Mammary epithelial cell (primary cell): ENCODE measurements at regions of chr10 and their contacts with region 1.

Region 1: GRCh38 chr10:80504158-80504811 is 33.4 kb upstream of the SH2D4B start:
- DNase-seq: no peak
- H3K4me3 ChIP-seq: no peak overlapping the region
- H3K27ac ChIP-seq: no peak overlapping the region
- H3K4me1 ChIP-seq: peaks cover 79% of the 10 kb centered on the region
- H3K27me3 ChIP-seq: no peaks in the 10 kb centered on the region
- CTCF ChIP-seq: no peak

Region 2: GRCh38 chr10:80382989-80383388 is 121.3 kb before region 1 on chr10:
- CTCF ChIA-PET with region 1: interaction called, 7 read pairs
- dilution Hi-C with region 1: no loop called
- in situ Hi-C with region 1: no loop called
- intact Hi-C with region 1: loop called (anchors 1 kb)
- DNase-seq: peak; percentile 27
- H3K4me3 ChIP-seq: no peak overlapping the region
- H3K27ac ChIP-seq: no peak overlapping the region
- H3K4me1 ChIP-seq: no peaks in the 10 kb centered on the region
- H3K27me3 ChIP-seq: no peaks in the 10 kb centered on the region
- CTCF ChIP-seq: peak; percentile 66 to 69

Region 3: GRCh38 chr10:80444646-80445319 is 59.5 kb before region 1 on chr10:
- CTCF ChIA-PET with region 1: interaction called, 7 read pairs
- dilution Hi-C with region 1: no loop called
- in situ Hi-C with region 1: no loop called
- intact Hi-C with region 1: loop called (anchors 1 kb)
- DNase-seq: peak; percentile 57
- H3K4me3 ChIP-seq: no peak overlapping the region
- H3K27ac ChIP-seq: no peak overlapping the region
- H3K4me1 ChIP-seq: peaks cover 3% of the 10 kb centered on the region
- H3K27me3 ChIP-seq: no peaks in the 10 kb centered on the region
- CTCF ChIP-seq: peak; percentile 80 to 92

Region 4: DNA sequence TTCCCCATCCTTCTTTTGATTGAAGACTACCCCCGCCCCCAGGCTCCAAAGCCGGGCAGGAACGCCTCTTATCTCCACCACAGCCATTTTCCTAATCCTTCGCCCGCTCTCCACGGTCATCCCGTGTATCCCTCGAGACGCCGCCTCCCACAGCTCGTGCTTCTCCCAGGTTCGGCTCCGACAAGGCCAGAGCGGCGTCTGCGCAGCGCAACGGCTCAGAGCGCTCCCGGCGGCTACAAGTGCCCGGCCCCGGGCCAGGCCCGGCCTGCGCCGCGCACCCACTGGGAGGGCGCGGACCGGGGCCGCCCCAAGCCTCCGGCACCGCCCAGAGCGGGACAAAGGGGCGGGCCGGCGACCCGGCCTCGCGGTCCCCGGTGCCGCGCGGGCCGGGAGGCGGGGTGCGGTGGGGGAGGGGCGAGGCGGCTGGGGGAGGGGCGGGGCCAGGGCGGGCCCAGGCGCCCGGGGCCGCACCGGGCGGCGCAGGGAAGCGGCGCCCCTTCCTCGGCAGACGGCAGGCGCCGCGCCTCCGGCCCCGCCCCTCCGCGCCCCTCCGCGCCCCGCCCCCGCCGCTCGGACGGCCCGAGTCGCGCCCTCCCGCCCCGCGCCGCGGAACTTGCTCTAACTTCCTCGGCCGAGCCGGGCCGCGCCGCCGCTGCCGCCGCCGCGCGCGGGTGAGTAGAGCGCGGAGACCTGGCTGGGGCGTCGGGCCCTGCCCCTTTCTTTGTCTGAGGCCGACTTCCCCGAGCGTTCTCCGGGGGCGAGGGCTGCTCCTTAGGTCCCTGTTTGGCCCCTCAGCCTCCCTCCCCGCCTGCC is 50.4 kb before region 1 on chr10 and contains the start of gene TSPAN14:
- CTCF ChIA-PET with region 1: interaction called, 13 read pairs
- dilution Hi-C with region 1: no loop called
- in situ Hi-C with region 1: loop called in 1 of 2 experiments (anchors 5 kb)
- intact Hi-C with region 1: loop called (anchors 1 kb)
- DNase-seq: peak; percentile 78
- H3K4me3 ChIP-seq: peak within 1 kb of the TSS; percentile 78 to 90 (median 86)
- H3K27ac ChIP-seq: peak within 1 kb of the TSS; percentile 71
- H3K4me1 ChIP-seq: peaks cover 43% of the 10 kb centered on the region
- H3K27me3 ChIP-seq: no peaks in the 10 kb centered on the region
- CTCF ChIP-seq: no peak
- total RNA-seq, gene TSPAN14: 47.8 to 102 TPM

Region 5: GRCh38 chr10:80459047-80459931 is 45.0 kb before region 1 on chr10:
- CTCF ChIA-PET with region 1: interaction called, 13 read pairs
- dilution Hi-C with region 1: no loop called
- in situ Hi-C with region 1: loop called in 1 of 2 experiments (anchors 5 kb)
- intact Hi-C with region 1: loop called (anchors 1 kb)
- DNase-seq: peak; percentile 93
- H3K4me3 ChIP-seq: peak overlapping the region in 2 of 3 experiments; percentile 10 to 27
- H3K27ac ChIP-seq: peak overlapping the region; percentile 59
- H3K4me1 ChIP-seq: peaks cover 81% of the 10 kb centered on the region
- H3K27me3 ChIP-seq: no peaks in the 10 kb centered on the region
- CTCF ChIP-seq: peak in 1 of 2 donors; percentile 8

Region 6: GRCh38 chr10:80472234-80473095 is 31.8 kb before region 1 on chr10:
- CTCF ChIA-PET with region 1: interaction called, 5 read pairs
- dilution Hi-C with region 1: loop called (anchors 5 kb)
- in situ Hi-C with region 1: no loop called
- intact Hi-C with region 1: loop called (anchors 1 kb)
- DNase-seq: peak; percentile 97
- H3K4me3 ChIP-seq: no peak overlapping the region
- H3K27ac ChIP-seq: peak overlapping the region; percentile 92
- H3K4me1 ChIP-seq: peaks cover 70% of the 10 kb centered on the region
- H3K27me3 ChIP-seq: no peaks in the 10 kb centered on the region
- CTCF ChIP-seq: no peak

Region 7: DNA sequence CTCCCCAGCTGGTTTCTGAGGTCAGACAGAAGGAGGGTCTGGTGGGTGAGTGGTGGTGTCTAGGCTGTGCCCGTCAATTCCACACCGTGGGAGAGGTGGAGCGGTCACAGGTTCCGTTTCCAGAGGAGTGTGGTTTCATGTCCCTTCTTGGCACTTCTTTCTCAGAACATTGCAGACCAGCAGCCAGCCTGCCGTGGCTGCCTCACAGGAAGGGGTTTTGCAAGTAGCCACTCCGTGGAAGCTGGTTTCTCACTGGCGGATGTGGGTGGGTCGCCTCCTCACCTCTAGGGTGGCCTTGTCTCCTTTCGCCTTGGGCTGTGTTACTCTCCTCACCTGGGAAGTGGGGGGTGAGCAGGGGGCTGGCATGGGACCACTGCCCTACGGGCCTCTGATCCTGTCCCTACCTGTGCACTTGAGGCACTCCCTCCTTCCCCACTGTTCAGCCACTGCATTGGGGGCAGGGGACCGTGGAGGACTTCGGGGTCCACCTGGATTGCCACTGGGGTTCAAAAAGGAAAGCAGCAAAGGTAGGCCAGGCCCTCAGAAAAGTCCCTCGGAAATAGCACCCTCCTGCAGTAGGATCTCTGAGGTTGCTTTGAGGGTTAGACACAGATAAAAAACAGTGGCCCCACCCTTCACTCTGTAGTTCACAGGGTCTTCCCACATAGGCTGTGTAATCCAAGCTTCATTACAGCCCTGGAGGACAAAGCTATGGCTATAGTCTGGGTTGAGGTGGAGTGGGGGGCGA is 16.3 kb before region 1 on chr10:
- CTCF ChIA-PET with region 1: interaction called, 11 read pairs
- dilution Hi-C with region 1: no loop called
- in situ Hi-C with region 1: no loop called
- intact Hi-C with region 1: no loop called
- DNase-seq: no peak
- H3K4me3 ChIP-seq: no peak overlapping the region
- H3K27ac ChIP-seq: peak overlapping the region; percentile 3
- H3K4me1 ChIP-seq: peaks cover 37% of the 10 kb centered on the region
- H3K27me3 ChIP-seq: no peaks in the 10 kb centered on the region
- CTCF ChIP-seq: no peak

Region 8: GRCh38 chr10:80730522-80730921 is 226.2 kb after region 1 on chr10:
- CTCF ChIA-PET with region 1: no interaction called
- dilution Hi-C with region 1: no loop called
- in situ Hi-C with region 1: no loop called
- intact Hi-C with region 1: no loop called
- DNase-seq: no peak
- H3K4me3 ChIP-seq: no peak overlapping the region
- H3K27ac ChIP-seq: no peak overlapping the region
- H3K4me1 ChIP-seq: no peaks in the 10 kb centered on the region
- H3K27me3 ChIP-seq: no peaks in the 10 kb centered on the region
- CTCF ChIP-seq: no peak